Dorsolateral prefrontal cortex (tissue), 120 donors: ENCODE measurements at regions of chr17 and their contacts with region 1.

Region 1: DNA sequence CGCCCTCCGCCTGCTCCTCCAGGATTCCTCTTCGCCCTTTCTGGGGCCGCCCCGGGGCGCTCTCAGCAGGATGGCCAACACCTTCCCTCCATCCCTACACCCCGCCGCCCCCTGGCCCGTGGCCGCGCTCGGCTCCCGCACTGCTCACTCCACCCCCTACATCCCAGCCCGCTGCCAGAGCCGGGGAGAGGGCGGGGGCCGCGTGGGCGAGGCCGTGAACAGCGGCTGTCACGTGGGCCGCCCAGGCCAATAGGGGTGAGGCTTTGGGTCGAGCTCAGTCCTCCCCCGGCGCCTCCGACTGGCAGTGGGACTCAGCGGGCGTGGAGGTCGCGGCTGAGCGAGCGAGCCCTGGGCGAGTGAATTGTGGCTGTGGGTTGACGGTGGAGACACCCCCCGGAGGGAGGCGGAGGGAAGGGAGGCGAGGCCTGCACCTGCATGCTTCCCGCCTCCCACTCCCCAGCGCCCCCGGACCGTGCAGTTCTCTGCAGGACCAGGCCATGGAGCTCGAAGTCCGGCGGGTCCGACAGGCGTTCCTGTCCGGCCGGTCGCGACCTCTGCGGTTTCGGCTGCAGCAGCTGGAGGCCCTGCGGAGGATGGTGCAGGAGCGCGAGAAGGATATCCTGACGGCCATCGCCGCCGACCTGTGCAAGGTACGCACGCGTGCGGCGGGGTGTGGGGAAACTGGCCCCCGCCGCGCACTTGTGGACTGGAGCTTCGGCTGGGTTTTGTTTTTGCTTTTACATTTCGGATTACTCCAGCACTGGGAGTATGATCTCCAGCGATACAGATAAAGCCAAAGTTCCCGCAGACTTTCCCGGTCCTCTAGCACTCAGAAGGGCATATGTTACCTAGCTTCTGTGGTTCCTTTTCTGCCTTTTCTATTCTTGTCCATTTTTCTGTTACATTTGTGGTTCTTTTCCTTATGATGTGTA is at the start of gene ALDH3A2:
- DNase-seq: peak; percentile 99 to 100 (median 99)
- H3K4me3 ChIP-seq: peak within 1 kb of the TSS; percentile 55 to 100 (median 87)
- H3K27ac ChIP-seq: peak within 1 kb of the TSS; percentile 92 to 100 (median 99)
- H3K27me3 ChIP-seq: no peaks in the 10 kb centered on the region
- CTCF ChIP-seq: peak in 43 of 56 donors; percentile 5 to 65 (median 38)
- total RNA-seq, gene ALDH3A2: 54.2 to 160 (median 92.6) TPM

Region 2: DNA sequence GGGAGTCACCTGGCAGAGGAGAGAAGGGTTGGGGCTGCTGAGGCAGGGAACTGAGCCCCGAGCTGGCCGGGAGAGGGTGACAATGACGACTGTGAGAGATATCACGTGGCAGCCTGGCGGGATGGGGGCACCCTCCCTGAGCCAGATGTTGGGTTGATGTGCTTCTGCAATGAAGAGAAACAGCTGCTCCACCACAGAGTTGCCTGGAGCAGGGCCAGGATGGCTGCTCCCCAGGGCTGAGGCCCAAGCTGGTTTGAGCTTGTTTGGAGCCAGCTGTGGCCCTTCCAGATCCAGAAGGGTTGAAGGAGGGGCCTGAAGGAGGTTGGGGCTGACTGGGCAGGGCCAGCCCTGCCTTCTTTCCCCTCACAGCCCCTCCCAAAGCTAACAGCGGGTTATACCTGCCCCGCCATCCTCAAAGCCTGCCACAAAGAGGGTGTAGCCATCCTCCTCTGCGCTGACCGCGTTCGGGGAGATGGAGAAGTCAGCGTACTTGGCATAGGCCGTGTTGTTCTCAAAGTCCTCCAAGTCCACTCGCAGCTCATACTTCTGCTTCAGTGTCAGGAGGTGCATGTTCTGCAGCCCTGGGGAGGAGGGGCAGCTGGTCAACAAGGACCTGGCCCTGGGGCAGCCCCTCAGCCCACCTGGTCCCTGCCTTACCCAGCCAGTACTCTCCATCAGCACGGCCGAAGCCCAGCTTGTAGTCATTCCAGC is 263.9 kb before region 1 on chr17:
- intact Hi-C with region 1: loop called in 1 of 2 experiments (anchors 10 kb)
- DNase-seq: peak in 9 of 10 donors; percentile 85 to 95 (median 89)
- H3K4me3 ChIP-seq: peak overlapping the region in 18 of 59 donors; percentile 1 to 45 (median 16)
- H3K27ac ChIP-seq: peak overlapping the region; percentile 5 to 93 (median 81)
- H3K27me3 ChIP-seq: no peaks in the 10 kb centered on the region
- CTCF ChIP-seq: peak in 12 of 56 donors; percentile 9 to 34 (median 17)

Region 3: DNA sequence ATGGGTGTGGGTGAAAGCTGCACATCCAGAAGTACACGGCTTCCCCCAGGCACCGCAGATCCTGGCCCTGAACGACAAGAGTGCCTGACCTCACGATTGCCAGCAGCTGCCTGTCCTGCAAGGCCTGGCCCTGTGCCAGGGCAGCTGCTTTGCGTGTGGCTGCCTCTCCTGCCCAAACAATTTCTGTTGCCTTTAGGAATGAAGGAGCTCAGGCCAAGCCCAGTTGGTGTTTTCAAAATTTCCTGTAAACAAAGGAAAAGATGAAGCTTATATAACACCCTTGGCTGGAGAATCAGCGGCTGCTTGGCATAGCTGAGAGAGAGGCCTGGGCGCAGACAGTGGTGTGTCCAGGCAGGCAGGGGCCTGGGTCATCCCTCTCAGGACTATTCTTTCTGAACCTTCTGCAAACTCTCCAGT is 79.3 kb after region 1 on chr17:
- intact Hi-C with region 1: loop called (anchors 1 to 2 kb)
- DNase-seq: peak; percentile 49 to 87 (median 82)
- H3K4me3 ChIP-seq: no peak overlapping the region
- H3K27ac ChIP-seq: peak overlapping the region; percentile 79 to 100 (median 98)
- H3K27me3 ChIP-seq: no peaks in the 10 kb centered on the region
- CTCF ChIP-seq: peak in 7 of 56 donors; percentile 5 to 22 (median 9)

Region 4: GRCh38 chr17:19753049-19753444 is 104.3 kb after region 1 on chr17:
- intact Hi-C with region 1: loop called in 1 of 2 experiments (anchors 1 kb)
- DNase-seq: peak in 9 of 10 donors; percentile 53 to 92 (median 77)
- H3K4me3 ChIP-seq: peak overlapping the region in 9 of 59 donors; percentile 0 to 39 (median 11)
- H3K27ac ChIP-seq: peak overlapping the region in 58 of 59 donors; percentile 42 to 96 (median 86)
- H3K27me3 ChIP-seq: no peaks in the 10 kb centered on the region
- CTCF ChIP-seq: peak in 4 of 56 donors; percentile 6 to 29 (median 8)

Region 5: DNA sequence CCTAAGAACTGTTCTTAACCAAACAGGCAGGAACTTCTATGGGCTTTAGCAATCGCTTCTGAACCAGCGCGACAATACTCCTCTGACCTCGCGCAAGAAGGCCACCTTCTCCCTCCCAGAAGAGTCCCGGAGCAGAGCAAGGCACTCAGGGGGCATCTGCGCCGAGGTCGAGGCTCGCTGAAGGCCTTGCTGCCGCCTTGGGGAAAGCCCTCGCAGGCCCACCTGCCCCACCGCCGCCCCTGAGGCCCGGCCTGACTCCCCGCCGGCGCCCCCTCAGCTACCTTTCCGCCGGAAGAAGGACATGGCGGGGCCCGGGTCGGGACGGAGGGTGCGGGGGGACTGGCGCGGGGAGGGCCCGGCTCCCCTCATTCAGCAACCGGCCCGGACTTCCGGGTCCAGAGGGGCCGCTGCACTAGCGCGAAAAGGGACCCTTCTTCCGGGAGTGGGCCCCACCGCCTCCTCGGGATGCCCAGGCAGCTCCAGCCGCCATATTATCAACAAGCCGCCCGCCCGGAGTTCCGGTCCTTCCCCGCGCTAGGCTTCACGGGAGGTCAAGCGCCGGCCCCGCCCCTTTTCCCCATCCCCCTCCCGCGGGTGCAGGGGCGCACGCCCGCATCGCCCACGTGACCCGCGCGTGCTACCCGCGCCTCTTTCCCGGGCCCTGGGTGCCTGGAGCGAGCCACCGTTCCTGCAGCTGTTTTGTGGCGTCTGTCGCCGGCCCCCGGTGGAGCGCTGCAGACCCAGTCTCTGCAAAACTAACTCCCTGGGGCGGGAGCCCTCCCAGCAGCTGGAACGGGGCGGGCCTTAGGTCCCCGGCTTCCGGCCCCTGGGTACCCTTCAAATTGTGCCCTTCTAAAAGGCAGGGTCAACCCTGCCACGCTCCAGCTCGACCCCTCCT is 328.8 kb after region 1 on chr17 and contains the start of gene AKAP10:
- intact Hi-C with region 1: loop called in 1 of 2 experiments (anchors 10 kb)
- DNase-seq: peak; percentile 90 to 95 (median 92)
- H3K4me3 ChIP-seq: peak within 1 kb of the TSS; percentile 70 to 100 (median 97)
- H3K27ac ChIP-seq: peak within 1 kb of the TSS; percentile 90 to 100 (median 98)
- H3K27me3 ChIP-seq: no peaks in the 10 kb centered on the region
- CTCF ChIP-seq: peak in 41 of 56 donors; percentile 8 to 58 (median 25)
- total RNA-seq, gene AKAP10: 47.3 to 84.2 (median 63.2) TPM